CD8-positive, alpha-beta T cell (primary cell): ENCODE measurements at regions of chr17 and their contacts with region 1.

Region 1: DNA sequence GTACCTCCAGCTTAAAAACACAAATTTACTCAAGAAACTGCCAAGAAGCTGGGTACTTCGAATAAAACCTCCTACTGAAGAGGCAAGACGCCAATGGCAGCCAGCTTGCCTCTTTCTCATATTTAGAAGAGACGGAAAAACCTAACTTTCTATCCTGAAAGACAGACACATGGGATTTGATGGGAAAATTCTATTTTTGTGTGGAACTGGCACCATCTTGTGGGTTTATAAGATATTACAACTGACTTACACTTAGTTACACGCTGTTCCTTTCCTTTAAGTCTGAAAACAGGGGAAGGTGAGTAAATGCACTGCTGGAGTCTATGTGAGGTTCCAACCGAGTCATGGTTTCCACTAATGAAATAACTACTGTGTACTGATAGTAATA is 10.3 kb downstream of the ZNF18 start:
- DNase-seq: no peak
- ATAC-seq: no peak
- H3K4me3 ChIP-seq: no peak overlapping the region
- H3K4me3 Mint-ChIP-seq: no peak overlapping the region
- H3K27ac ChIP-seq: no peak overlapping the region
- H3K27ac Mint-ChIP-seq: no peak overlapping the region
- H3K4me1 ChIP-seq: no peaks in the 10 kb centered on the region
- H3K4me1 Mint-ChIP-seq: peaks cover 28% of the 10 kb centered on the region
- H3K27me3 ChIP-seq: no peaks in the 10 kb centered on the region
- H3K27me3 Mint-ChIP-seq: no peaks in the 10 kb centered on the region
- CTCF ChIP-seq: no peak

Region 2: GRCh38 chr17:12020642-12021622 is 34.0 kb after region 1 on chr17 and contains the start of gene MAP2K4:
- CTCF ChIA-PET with region 1: interaction called, 3 read pairs
- POLR2A ChIA-PET with region 1: interaction called, 3 read pairs
- intact Hi-C with region 1: loop called in 1 of 2 experiments (anchors 5 kb)
- DNase-seq: peak; percentile 89 to 98 (median 95)
- ATAC-seq: peak; percentile 98
- H3K4me3 ChIP-seq: peak within 1 kb of the TSS; percentile 44 to 53
- H3K4me3 Mint-ChIP-seq: peak within 1 kb of the TSS; percentile 84
- H3K27ac ChIP-seq: peak within 1 kb of the TSS; percentile 46 to 67
- H3K27ac Mint-ChIP-seq: peak within 1 kb of the TSS; percentile 74
- H3K4me1 ChIP-seq: peaks cover 41% of the 10 kb centered on the region
- H3K4me1 Mint-ChIP-seq: peaks cover 52% of the 10 kb centered on the region
- H3K27me3 ChIP-seq: no peaks in the 10 kb centered on the region
- H3K27me3 Mint-ChIP-seq: peaks cover 2% of the 10 kb centered on the region
- CTCF ChIP-seq: no peak
- total RNA-seq, gene MAP2K4: 29.4 to 31.7 TPM